ENCODE measurements at regions of chr2 and their contacts with region 1.

Region 1: GRCh38 chr2:53422979-53423378 is 344.6 kb upstream of the CHAC2 start:
- DNase-seq: peak in 1 of 5 donors; percentile 24
- ATAC-seq: peak in 1 of 4 donors; percentile 47
- H3K4me3 ChIP-seq: no peak overlapping the region
- H3K27ac ChIP-seq: no peak overlapping the region
- H3K4me1 ChIP-seq: no peaks in the 10 kb centered on the region
- H3K27me3 ChIP-seq: no peaks in the 10 kb centered on the region
- CTCF ChIP-seq: peak in 7 of 12 donors; percentile 12 to 43 (median 28)
- POLR2A ChIP-seq: no peak

Region 2: DNA sequence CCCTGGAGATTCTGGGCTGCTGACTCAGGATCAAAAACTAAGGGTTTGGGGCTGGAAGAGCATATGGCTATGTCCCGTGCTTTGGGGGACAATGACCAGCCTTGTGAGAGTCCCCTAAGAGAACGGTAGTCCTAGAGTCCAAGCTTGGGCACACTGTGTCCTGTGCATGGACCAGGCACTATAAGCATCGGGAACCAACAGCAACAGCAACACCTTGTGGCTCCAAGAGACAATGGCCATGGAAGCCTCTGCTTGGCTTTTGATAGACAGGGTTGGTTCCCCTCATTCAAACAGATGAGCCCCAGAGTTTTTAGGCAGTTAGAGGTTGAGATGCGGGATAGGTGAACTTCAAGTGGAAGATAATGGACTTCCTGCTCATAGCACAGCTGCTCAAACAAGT is 50.3 kb after region 1 on chr2:
- intact Hi-C with region 1: loop called in 1 of 10 experiments (anchors 1 kb)
- DNase-seq: peak in 1 of 5 donors; percentile 28
- ATAC-seq: peak in 3 of 4 donors; percentile 65 to 84 (median 84)
- H3K4me3 ChIP-seq: no peak overlapping the region
- H3K27ac ChIP-seq: no peak overlapping the region
- H3K4me1 ChIP-seq: no peaks in the 10 kb centered on the region
- H3K27me3 ChIP-seq: no peaks in the 10 kb centered on the region
- CTCF ChIP-seq: peak in 11 of 12 donors; percentile 16 to 48 (median 30)
- POLR2A ChIP-seq: no peak

Region 3: GRCh38 chr2:53724536-53724935 is 301.6 kb after region 1 on chr2:
- intact Hi-C with region 1: loop called in 1 of 10 experiments (anchors 10 kb)
- DNase-seq: no peak
- ATAC-seq: no peak
- H3K4me3 ChIP-seq: no peak overlapping the region
- H3K27ac ChIP-seq: no peak overlapping the region
- H3K4me1 ChIP-seq: no peaks in the 10 kb centered on the region
- H3K27me3 ChIP-seq: no peaks in the 10 kb centered on the region
- CTCF ChIP-seq: no peak
- POLR2A ChIP-seq: no peak

Measured in heart left ventricle (tissue), 16 donors.